CD8-positive, alpha-beta T cell (primary cell): ENCODE measurements at regions of chr2 and their contacts with region 1.

Region 1: DNA sequence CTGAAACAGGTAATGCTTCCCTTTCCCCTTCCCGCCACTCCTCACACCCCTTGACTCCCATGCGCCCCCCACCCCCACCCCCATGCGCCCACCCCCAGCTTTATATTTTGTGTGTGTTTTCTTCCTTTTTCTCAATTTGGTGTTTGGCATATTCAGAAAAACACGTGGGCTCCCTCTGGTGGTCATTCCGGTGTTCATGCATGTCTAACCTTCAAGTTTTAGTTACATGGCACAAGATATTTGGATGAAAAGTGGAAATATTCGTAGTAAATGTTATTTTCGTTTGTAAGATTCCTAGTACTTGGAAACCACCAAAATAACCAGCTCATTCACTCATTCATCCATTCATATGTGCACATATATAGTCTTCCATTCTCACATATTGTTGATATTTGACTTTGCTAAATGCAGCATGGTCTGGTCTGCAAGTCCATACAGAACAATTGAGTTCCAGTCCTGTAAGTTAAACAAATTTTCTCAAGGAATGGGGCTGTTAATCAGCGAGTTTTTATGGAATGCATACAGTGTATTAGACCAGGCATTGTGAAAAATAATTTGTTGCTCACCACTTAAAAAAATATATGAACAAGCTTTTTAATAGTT is 143.6 kb upstream of the MAP3K20 start:
- DNase-seq: peak; percentile 21 to 74 (median 65)
- ATAC-seq: no peak
- H3K4me3 ChIP-seq: no peak overlapping the region
- H3K4me3 Mint-ChIP-seq: no peak overlapping the region
- H3K27ac ChIP-seq: no peak overlapping the region
- H3K27ac Mint-ChIP-seq: no peak overlapping the region
- H3K4me1 ChIP-seq: peaks cover 5% of the 10 kb centered on the region
- H3K4me1 Mint-ChIP-seq: peaks cover 7% of the 10 kb centered on the region
- H3K27me3 ChIP-seq: no peaks in the 10 kb centered on the region
- H3K27me3 Mint-ChIP-seq: no peaks in the 10 kb centered on the region
- CTCF ChIP-seq: peak; percentile 76

Region 2: DNA sequence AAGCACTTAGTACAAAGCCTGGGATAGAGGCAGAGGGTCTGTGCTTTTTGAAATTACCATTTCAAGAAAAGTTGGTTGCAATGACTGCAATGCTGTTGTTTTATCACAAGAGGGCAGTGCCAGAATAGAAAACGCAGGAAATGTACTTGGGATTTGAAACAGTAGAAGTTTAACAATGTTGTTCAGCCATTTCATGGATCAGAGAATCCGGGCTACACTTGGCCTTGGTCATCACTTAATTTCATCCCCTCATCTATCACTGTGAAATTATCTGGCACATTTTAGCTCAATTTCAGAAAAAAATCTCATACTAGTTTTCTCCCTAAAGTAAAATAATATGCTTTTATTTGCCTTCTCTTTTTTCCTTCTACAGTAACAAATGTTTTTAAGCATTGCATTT is 125.5 kb before region 1 on chr2:
- CTCF ChIA-PET with region 1: interaction called, 35 read pairs
- POLR2A ChIA-PET with region 1: no interaction called
- intact Hi-C with region 1: loop called (anchors 1 kb)
- DNase-seq: peak in 2 of 9 experiments; percentile 19 to 38
- ATAC-seq: no peak
- H3K4me3 ChIP-seq: no peak overlapping the region
- H3K4me3 Mint-ChIP-seq: no peak overlapping the region
- H3K27ac ChIP-seq: no peak overlapping the region
- H3K27ac Mint-ChIP-seq: no peak overlapping the region
- H3K4me1 ChIP-seq: no peaks in the 10 kb centered on the region
- H3K4me1 Mint-ChIP-seq: peaks cover 2% of the 10 kb centered on the region
- H3K27me3 ChIP-seq: peaks cover 0 to 4% of the 10 kb centered on the region in 2 experiments
- H3K27me3 Mint-ChIP-seq: no peaks in the 10 kb centered on the region
- CTCF ChIP-seq: peak; percentile 82

Region 3: GRCh38 chr2:172864182-172864581 is 67.8 kb before region 1 on chr2:
- CTCF ChIA-PET with region 1: interaction called, 11 read pairs
- POLR2A ChIA-PET with region 1: no interaction called
- intact Hi-C with region 1: loop called (anchors 1 kb)
- DNase-seq: peak in 5 of 9 experiments; percentile 6 to 52 (median 27)
- ATAC-seq: no peak
- H3K4me3 ChIP-seq: no peak overlapping the region
- H3K4me3 Mint-ChIP-seq: no peak overlapping the region
- H3K27ac ChIP-seq: no peak overlapping the region
- H3K27ac Mint-ChIP-seq: no peak overlapping the region
- H3K4me1 ChIP-seq: no peaks in the 10 kb centered on the region
- H3K4me1 Mint-ChIP-seq: no peaks in the 10 kb centered on the region
- H3K27me3 ChIP-seq: no peaks in the 10 kb centered on the region
- H3K27me3 Mint-ChIP-seq: peaks cover 16% of the 10 kb centered on the region
- CTCF ChIP-seq: no peak

Region 4: DNA sequence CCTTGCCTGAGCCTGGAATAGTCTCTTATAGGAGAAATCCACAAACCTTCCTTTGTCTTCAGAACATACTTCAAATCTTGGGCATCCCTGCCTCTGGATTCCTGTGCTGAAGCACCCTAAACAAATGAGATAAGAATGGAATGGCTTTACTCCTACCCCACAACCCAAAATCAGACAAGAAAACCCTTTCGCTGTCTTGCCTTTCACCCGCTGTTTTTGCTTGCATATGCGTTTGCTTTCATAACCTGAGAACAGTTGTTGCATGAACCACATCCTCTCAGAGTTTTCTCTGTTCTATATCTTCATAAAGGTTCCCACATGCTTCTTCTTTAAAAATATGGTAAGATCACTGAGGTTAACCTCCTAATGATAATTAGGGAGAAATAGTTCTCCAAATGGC is 11.5 kb after region 1 on chr2:
- CTCF ChIA-PET with region 1: interaction called, 23 read pairs
- POLR2A ChIA-PET with region 1: no interaction called
- intact Hi-C with region 1: no loop called
- DNase-seq: peak in 2 of 9 experiments; percentile 16 to 41
- ATAC-seq: peak; percentile 58
- H3K4me3 ChIP-seq: no peak overlapping the region
- H3K4me3 Mint-ChIP-seq: peak overlapping the region; percentile 6
- H3K27ac ChIP-seq: peak overlapping the region in 1 of 2 experiments; percentile 2
- H3K27ac Mint-ChIP-seq: peak overlapping the region; percentile 80
- H3K4me1 ChIP-seq: peaks cover 20% of the 10 kb centered on the region
- H3K4me1 Mint-ChIP-seq: peaks cover 26% of the 10 kb centered on the region
- H3K27me3 ChIP-seq: no peaks in the 10 kb centered on the region
- H3K27me3 Mint-ChIP-seq: no peaks in the 10 kb centered on the region
- CTCF ChIP-seq: no peak